Endothelial cell of umbilical vein (primary cell): ENCODE measurements at regions of chr10 and their contacts with region 1.

Region 1: DNA sequence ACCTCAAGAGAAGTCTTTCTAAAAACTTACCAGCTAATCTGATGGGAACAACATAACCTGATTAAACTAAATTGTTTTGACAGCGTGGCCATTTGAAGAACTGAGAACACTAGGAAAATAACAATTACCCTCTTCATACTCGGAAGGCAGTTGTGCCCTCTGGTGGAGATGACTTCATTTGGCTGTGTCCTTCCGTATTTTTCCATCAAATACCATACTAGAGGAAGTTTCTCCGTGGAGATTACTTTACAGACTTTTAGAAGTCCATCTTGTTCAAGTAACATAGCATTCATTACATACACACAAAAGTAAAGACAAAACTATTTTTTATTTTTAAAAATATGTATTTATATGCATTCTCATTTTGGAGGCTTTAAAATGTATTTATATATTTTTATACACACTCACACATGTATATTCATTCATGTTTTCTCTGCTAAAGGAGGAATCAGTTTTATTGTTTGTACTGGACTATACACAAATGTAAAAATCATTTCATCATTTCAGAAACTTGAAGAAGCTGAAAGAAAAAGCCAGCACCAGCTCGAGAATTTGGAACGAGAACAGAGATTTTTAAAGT is 25.2 kb downstream of the SMNDC1 start:
- DNase-seq: peak; percentile 76
- H3K4me3 ChIP-seq: peak overlapping the region in 1 of 3 experiments; percentile 41
- H3K27ac ChIP-seq: no peak overlapping the region
- H3K4me1 ChIP-seq: peaks cover 5% of the 10 kb centered on the region
- H3K27me3 ChIP-seq: peaks cover 0 to 2% of the 10 kb centered on the region in 2 experiments
- CTCF ChIP-seq: peak; percentile 61 to 66
- POLR2A ChIP-seq: no peak

Region 2: DNA sequence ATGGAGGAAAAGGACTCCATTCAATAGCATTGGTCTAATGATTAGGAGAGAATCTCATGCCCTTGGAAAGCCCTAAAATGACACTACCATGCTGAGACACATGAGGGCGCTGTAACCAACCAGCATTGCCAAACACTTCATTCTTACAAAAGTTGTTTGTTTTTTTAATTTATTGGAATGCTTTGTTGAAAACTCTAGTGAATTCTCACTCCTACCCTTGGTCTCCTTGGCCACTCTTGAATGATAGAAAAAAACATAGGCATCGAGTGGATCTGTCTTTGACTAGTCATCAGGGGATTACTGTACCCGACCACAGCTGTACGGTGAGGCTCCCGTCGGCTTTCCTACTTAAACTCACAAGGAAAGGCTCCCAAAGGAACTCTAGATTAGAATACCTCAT is 301.0 kb before region 1 on chr10:
- CTCF ChIA-PET with region 1: interaction called, 3 read pairs
- POLR2A ChIA-PET with region 1: no interaction called
- dilution Hi-C with region 1: no loop called
- intact Hi-C with region 1: loop called (anchors 2 kb)
- DNase-seq: peak; percentile 66
- H3K4me3 ChIP-seq: no peak overlapping the region
- H3K27ac ChIP-seq: no peak overlapping the region
- H3K4me1 ChIP-seq: no peaks in the 10 kb centered on the region
- H3K27me3 ChIP-seq: no peaks in the 10 kb centered on the region
- CTCF ChIP-seq: peak; percentile 71 to 77
- POLR2A ChIP-seq: no peak

Region 3: GRCh38 chr10:110210674-110211464 is 68.6 kb before region 1 on chr10:
- CTCF ChIA-PET with region 1: interaction called, 15 read pairs
- POLR2A ChIA-PET with region 1: no interaction called
- dilution Hi-C with region 1: no loop called
- intact Hi-C with region 1: loop called (anchors 1 kb)
- DNase-seq: peak; percentile 99
- H3K4me3 ChIP-seq: peak overlapping the region; percentile 48 to 68 (median 57)
- H3K27ac ChIP-seq: no peak overlapping the region
- H3K4me1 ChIP-seq: peaks cover 4% of the 10 kb centered on the region
- H3K27me3 ChIP-seq: peaks cover 21 to 29% of the 10 kb centered on the region in 2 experiments
- CTCF ChIP-seq: no peak
- POLR2A ChIP-seq: no peak

Region 4: DNA sequence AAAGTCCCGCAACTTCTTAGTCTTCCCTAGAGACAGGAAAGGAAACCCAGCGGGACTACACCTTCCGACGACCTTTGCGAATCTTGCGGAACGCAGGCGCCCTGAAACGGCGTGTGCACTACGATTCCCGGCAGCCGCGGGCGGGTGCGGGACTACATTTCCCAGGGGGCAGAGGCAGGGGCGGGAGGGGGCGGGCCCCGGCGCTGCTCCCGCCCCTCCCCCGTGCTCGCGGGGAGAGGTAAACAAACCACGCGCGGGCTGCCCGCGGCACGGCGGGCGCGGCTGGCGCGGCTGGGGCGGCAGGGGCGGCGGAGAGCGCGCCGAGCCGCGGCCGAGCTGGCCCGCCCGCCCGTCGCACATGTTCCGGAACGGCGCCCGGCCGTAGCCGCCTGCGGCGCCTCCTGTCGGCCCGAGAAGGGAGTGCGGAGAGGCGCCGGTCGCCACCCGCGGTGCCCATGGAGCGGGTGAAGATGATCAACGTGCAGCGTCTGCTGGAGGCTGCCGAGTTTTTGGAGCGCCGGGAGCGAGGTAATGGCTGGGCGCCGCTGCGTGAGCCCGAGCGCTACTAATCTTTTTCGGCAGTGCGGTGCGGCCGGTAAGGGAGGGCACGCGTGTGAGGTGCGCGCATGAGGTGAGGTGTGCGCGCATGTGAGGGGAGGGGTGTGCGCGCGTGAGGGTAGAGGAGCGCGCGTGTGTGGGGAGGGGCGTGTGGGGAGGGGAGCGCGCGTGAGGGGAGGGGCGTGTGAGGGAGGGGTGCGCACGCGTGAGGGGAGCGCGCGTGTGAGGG is 53.5 kb before region 1 on chr10:
- CTCF ChIA-PET with region 1: interaction called, 3 read pairs
- POLR2A ChIA-PET with region 1: no interaction called
- dilution Hi-C with region 1: no loop called
- intact Hi-C with region 1: loop called (anchors 2 kb)
- DNase-seq: peak; percentile 89
- H3K4me3 ChIP-seq: peak overlapping the region; percentile 74 to 92 (median 75)
- H3K27ac ChIP-seq: no peak overlapping the region
- H3K4me1 ChIP-seq: peaks cover 8% of the 10 kb centered on the region
- H3K27me3 ChIP-seq: no peaks in the 10 kb centered on the region
- CTCF ChIP-seq: peak; percentile 54 to 79
- POLR2A ChIP-seq: no peak